ENCODE measurements at regions of chr16 and their contacts with region 1.

Region 1: DNA sequence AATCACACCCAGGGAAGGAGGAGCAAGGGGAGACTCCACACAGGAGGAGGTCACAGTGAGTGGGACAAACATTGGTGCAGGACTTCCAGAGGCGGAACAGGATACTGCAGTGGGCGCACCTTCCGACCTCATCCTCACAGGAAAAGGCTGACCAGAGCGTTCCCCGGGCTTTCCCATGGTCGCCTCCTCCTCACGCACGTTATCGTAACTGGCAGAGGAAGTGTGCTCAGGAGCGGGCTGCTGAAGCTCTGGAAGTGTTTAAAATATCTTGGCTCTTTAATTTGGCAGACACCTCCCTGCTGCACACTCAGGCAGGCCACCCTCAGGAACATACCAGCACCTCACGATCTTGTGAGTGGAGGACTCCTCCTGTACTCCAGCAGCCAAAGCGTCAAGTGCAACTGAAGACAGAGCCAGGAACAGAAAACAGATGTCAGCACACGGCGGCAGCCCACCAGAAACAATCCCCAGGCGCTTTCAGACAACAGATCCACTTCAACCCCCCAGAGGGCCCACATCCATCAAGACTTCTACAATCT is 17.5 kb downstream of the FANCA start:
- DNase-seq: no peak
- ATAC-seq: peak; percentile 63 to 83 (median 77)
- H3K4me3 ChIP-seq: no peak overlapping the region
- H3K27ac ChIP-seq: no peak overlapping the region
- H3K4me1 ChIP-seq: no peaks in the 10 kb centered on the region
- H3K27me3 ChIP-seq: no peaks in the 10 kb centered on the region
- CTCF ChIP-seq: no peak
- POLR2A ChIP-seq: no peak

Region 2: GRCh38 chr16:89602273-89602951 is 196.5 kb before region 1 on chr16:
- intact Hi-C with region 1: no loop called
- DNase-seq: no peak
- ATAC-seq: peak; percentile 43 to 70 (median 52)
- H3K4me3 ChIP-seq: no peak overlapping the region
- H3K27ac ChIP-seq: no peak overlapping the region
- H3K4me1 ChIP-seq: no peaks in the 10 kb centered on the region
- H3K27me3 ChIP-seq: no peaks in the 10 kb centered on the region
- CTCF ChIP-seq: no peak
- POLR2A ChIP-seq: no peak

Region 3: DNA sequence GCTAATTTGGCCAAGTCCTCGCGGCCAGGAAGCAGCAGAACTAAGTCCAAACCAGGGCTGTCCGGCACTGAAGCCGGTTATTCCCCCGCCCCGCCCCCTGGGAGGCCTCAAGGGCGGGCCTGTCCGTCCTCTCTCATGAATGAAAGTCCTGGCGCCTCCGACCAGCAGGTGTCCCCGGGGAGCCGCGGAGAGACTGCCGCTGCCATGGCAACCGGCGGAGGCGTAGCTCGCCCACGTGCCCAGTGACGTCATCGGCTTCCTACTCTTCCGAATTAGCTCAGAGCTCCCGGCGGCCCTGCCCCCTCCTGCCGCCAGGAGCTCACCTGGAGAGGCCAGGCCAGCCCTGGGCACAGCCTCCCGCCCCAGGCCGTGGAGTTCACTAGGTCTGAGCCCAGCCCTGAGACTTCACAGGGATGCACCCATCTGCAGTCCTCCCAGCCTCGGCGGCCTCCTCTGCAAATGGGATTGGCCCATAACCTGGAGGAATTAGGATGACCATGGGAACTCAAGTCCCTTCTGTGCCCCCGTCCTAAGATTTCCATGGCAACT is 98.7 kb before region 1 on chr16:
- intact Hi-C with region 1: loop called in 1 of 2 experiments (anchors 10 kb)
- DNase-seq: peak; percentile 100
- ATAC-seq: peak; percentile 76 to 83 (median 80)
- H3K4me3 ChIP-seq: peak overlapping the region; percentile 65 to 74 (median 69)
- H3K27ac ChIP-seq: peak overlapping the region; percentile 74 to 80 (median 79)
- H3K4me1 ChIP-seq: peaks cover 0 to 19% (median 7%) of the 10 kb centered on the region in 4 donors
- H3K27me3 ChIP-seq: no peaks in the 10 kb centered on the region
- CTCF ChIP-seq: peak; percentile 84 to 90 (median 88)
- POLR2A ChIP-seq: peak; percentile 52

Region 4: GRCh38 chr16:89711601-89712273 is 87.2 kb before region 1 on chr16:
- intact Hi-C with region 1: loop called (anchors 5 to 10 kb)
- DNase-seq: peak in 1 of 3 donors; percentile 61
- ATAC-seq: peak; percentile 65 to 85 (median 78)
- H3K4me3 ChIP-seq: peak overlapping the region in 2 of 3 donors; percentile 31 to 54
- H3K27ac ChIP-seq: no peak overlapping the region
- H3K4me1 ChIP-seq: peaks cover 0 to 6% (median 0%) of the 10 kb centered on the region in 4 donors
- H3K27me3 ChIP-seq: no peaks in the 10 kb centered on the region
- CTCF ChIP-seq: no peak
- POLR2A ChIP-seq: no peak

Region 5: GRCh38 chr16:89860747-89861304 is 61.9 kb after region 1 on chr16:
- intact Hi-C with region 1: loop called in 1 of 2 experiments (anchors 10 kb)
- DNase-seq: peak in 2 of 3 donors; percentile 62 to 75
- ATAC-seq: peak; percentile 87 to 93 (median 90)
- H3K4me3 ChIP-seq: no peak overlapping the region
- H3K27ac ChIP-seq: no peak overlapping the region
- H3K4me1 ChIP-seq: no peaks in the 10 kb centered on the region
- H3K27me3 ChIP-seq: no peaks in the 10 kb centered on the region
- CTCF ChIP-seq: peak; percentile 93 to 95 (median 94)
- POLR2A ChIP-seq: no peak

Measured in right lobe of liver (tissue), 6 donors.